Sciatic nerve (tissue), 2 donors: ENCODE measurements at regions of chr6 and their contacts with region 1.

Region 1: DNA sequence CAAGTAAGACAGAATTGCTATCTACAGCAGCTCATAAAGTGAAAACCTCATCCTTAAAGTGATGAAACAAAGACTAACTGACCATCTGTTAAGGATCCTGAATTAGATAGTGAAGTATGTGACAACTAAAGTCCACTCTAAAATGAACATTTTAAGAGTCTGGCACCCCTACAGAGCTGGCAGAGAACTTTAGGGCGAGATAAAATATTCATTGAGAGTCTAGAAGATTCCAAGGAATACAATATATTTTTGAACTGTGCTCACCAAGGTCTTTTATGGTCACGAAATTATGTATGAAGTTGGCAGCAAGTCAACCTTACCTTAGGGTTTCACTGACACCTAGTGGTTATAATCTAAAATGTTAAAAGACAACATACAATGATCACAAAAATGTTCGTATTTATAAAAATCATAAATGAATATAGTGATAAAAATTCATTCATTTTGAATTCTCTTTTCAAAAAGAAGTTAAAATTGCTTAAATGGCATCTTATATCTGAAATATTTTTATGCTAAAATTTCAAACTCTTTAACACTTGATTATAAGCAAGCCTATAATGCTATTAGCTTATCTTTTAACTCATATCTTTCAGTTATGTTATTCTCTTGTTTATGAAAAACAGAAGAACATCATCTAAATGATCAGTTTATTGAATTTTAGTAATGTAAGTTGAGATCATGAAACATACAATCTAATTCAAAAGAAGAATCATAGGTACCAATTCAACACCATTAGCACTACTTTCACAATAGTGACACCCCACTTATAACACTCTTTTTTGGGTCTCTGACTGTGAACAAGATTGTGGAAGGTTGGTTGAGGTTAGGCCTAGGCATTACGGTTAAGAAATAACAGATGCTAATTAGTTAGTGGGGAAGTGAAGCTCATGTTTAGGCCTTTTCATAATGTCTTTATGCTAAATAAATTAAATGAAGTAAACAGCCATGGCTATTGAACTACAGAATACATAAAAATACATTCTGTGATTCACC is 27.5 kb downstream of the RSPH3 start:
- DNase-seq: no peak
- ATAC-seq: peak; percentile 61

Region 2: DNA sequence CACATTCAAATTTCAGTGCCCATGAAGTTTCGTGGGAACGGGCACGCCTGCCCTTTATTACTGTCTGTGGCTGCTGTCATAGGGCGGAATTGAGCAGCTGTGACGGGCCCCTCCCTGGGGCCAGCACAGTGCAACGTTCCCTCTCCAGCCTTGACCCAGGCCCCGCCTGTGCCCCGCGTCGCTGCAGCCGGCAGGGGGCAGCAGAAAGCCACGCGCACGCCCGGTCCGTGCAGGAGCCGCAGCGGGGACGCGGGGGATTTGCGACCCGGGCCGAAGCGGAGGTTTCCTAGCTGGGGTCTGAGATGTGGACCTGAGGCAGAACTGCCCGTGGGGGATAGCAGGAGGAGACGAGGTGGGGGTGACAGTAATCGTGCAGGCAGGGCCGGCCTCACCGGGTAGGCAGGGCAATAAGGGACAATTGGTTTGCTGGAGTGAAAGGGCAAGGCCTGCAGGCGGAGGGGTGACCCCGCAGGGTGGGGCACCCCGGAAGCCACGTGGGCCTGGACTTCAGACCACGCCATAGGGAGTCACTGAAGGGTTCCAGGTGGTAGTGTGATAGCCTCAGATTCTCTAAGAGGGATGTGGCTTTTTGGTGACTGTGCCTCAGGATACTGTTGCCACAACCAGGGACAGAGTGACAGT is 268.2 kb before region 1 on chr6:
- intact Hi-C with region 1: loop called (anchors 10 kb)
- DNase-seq: peak; percentile 90
- ATAC-seq: peak; percentile 93

Region 3: GRCh38 chr6:158853072-158853871 is 119.3 kb before region 1 on chr6:
- intact Hi-C with region 1: no loop called
- DNase-seq: no peak
- ATAC-seq: peak; percentile 36